Activated CD4-positive, alpha-beta memory T cell treated with anti-CD3 and anti-CD28 coated beads, Interleukin-2, amount 10 ng/mL, durations not matched to agents 7 days and 5 days (primary cell): ENCODE measurements at regions of chr1 and their contacts with region 1.

Region 1: DNA sequence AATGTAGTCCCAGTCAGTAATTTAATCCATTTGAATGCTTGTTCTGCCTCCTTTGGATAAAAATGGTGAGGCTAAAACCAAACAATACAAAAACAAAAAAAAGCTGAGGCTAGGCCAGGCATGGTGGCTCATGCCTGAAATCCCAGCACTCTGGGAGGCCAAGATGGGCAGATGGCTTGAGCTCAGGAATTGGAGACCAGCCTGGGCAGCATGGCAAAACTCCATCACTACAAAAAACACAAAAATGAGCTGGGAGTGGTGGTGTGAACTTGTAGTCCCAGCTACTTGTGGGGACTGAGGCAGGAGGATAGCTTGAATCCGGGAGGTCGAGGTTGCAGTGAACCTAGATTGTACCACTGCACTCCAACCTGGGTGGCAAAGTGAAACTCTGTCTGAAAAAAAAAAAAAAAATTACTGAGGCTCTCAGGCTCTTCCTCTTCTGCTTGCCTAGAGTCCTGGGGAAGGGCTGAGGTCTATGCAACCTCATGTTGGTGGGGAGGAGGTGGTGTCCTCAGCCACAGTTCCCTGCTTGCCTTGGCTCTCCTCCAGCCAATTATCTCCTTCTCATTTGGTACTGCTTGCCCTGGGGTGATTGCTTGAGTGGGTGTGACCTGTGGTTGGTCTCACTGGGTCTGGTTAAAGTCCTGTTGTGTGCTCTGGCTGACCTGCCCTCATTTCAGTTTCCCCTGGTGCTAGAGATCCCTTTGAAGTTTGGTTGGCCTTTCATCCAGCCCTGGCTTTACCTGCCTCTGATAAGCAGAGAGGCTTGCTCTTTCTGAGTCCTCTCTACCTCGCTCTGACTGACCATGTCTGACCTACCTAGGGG is 20.9 kb downstream of the S1PR1 start:
- DNase-seq: peak; percentile 64
- H3K4me3 Mint-ChIP-seq: no peak overlapping the region
- H3K27ac Mint-ChIP-seq: peak overlapping the region; percentile 63
- H3K4me1 Mint-ChIP-seq: peaks cover 58% of the 10 kb centered on the region
- H3K27me3 Mint-ChIP-seq: no peaks in the 10 kb centered on the region

Region 2: DNA sequence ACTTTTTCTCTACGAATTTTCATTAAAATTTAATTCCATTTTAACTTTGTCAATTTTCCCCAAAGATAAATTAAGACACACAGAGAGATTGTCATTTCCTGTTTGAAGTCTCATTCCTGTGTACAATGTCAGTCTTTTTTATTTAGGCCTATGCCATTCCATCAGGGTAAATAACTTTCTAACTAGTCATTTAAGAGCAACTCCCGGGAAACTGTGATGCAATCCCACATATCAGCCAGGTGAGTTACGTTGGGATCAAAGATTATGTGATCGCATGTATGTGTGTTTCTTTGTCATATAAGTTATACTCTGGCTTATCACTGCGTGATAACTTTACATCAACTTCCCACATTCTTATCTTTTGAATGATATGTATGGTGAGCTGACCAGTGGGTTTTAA is 107.0 kb before region 1 on chr1:
- CTCF ChIA-PET with region 1: no interaction called
- POLR2A ChIA-PET with region 1: no interaction called
- DNase-seq: no peak
- H3K4me3 Mint-ChIP-seq: no peak overlapping the region
- H3K27ac Mint-ChIP-seq: no peak overlapping the region
- H3K4me1 Mint-ChIP-seq: peaks cover 6% of the 10 kb centered on the region
- H3K27me3 Mint-ChIP-seq: no peaks in the 10 kb centered on the region

Region 3: DNA sequence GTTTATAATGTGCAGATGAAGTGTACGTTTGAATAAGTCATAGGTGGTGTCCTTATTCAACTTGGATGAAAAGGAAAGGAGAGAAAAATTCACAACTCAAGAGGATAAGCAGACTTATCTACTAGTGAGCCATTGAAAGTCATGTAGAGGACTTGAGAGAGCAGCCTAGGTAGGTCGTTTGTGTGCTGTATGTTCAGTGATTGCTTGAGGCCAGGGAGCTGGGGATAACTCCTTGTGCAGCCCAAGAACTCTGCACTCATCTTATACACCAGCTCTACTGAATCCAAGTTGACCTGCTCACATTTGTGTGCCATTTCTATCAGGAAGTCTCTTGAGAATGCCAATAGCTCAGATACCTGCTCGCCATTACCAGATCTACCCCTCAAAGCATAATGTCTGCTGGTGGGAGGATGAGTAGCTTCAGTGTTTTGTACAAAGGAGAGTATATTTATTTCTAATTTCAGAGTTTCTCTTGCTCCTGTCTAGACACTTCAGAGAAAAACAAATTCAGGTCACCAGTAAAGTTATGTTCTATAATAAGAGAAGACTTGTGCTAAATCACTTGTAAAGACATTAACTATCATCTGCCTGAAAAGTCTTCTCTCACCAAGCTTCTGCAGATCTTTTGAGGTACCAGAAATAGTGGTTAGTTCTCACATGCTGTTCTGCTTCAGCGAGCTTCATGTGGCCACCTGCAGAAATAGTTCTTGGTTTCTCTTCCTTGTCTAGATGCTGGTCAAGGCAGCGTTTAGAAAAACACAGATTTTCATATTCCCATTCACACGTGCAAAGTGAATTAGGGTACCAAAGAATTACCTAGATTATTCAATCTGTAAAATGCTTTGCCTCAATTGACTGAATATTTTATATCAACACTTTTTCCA is 10.1 kb before region 1 on chr1:
- CTCF ChIA-PET with region 1: interaction called, 41 read pairs
- POLR2A ChIA-PET with region 1: interaction called, 77 read pairs
- DNase-seq: no peak
- H3K4me3 Mint-ChIP-seq: no peak overlapping the region
- H3K27ac Mint-ChIP-seq: no peak overlapping the region
- H3K4me1 Mint-ChIP-seq: peaks cover 32% of the 10 kb centered on the region
- H3K27me3 Mint-ChIP-seq: no peaks in the 10 kb centered on the region